Activated naive CD8-positive, alpha-beta T cell treated with anti-CD3 and anti-CD28 coated beads, Interleukin-2, amount 10 ng/mL, durations not matched to agents 7 days and 5 days (primary cell): ENCODE measurements at regions of chr13 and their contacts with region 1.

Region 1: DNA sequence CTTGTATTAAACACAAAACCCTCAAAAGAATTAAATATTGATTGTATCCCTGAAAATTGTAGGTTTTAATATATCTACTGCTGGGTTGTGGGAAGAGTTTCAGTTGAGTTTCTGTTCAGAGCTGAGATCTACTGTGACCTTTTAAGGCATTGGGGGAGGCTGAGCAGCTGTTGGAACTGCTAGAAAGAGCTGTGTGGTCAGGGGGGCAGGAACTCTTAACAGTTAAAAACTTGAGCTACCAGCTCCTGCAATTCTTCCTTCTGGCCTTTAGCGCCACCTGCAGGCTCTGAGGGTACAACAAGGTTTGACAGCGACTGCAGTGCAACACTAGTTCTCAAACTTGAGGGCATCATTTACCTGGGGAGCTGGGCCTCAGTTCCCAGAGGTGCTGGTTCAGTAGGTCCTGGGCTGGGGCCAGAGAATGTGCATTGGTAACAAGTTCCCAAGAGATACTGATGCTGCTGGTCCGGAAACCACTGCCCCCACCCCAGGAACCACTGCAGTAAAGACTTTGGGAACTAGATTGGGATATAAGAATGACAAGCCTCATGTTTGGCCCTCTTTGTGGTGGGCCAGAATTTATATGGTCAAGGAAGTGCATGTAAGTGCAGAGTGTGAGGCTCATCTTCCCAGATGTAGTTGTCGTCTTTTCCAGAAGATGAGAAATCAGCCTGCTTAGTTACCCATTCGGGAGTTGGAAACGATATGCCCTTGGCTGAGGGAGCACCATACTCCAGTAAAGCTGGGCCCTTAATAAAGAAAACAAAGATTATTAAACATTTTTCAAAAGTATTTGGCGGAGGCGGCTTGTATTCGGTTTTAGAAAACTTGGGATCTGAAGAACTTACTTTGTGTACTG is 2.6 kb downstream of the RNASEH2B start:
- DNase-seq: peak; percentile 92
- ATAC-seq: peak; percentile 73
- H3K4me3 Mint-ChIP-seq: peak overlapping the region; percentile 94
- H3K27ac Mint-ChIP-seq: peak overlapping the region; percentile 98
- H3K4me1 Mint-ChIP-seq: peaks cover 58% of the 10 kb centered on the region
- H3K27me3 Mint-ChIP-seq: no peaks in the 10 kb centered on the region

Region 2: DNA sequence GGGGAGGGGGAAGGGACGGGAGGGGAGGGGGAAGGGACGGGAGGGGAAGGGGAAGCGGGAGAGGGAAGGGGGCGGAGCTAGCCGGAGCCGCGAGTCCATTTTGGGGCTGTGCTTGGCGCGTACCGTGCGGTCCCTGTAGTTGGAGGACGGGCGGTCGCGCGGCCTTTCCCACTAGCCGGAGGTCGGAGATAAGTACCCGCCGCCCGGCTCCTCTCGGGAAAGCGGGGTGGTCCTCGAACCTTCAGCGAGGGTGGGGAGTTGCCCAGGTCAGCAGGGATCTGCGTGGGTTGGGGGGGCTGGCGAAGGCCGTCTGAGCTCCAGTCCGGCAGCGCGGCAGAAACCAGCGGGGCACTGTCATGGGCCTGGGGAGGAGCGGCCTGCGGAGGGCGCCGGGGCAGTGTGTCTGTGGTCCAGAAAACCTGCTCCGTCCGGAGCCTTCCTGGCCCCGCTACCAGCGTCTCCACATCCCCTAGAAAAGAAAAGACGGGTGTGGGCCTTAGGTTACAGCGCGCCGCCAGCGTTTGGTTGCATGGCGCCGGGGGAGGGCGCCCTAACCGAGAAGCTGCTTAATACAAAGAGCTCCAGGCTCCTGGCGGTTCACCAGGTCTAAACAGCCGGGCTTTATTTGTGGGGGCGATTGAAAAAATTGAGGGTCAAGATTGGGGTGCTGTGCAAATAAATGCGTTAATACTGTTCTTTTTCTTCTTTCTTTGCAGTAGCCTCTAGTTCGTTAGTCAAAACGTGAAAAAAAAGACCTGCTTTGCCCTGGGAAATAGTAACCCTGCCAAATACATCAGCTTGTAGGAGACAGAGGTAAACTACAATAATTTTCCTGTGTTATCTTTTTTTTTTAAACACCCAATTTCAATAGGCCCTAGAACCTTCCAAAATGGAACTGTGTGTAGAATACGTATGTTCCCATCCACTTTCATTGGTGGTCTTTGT is 914.9 kb before region 1 on chr13 and contains the start of gene TRIM13:
- POLR2A ChIA-PET with region 1: interaction called, 12 read pairs
- DNase-seq: peak; percentile 86
- ATAC-seq: peak; percentile 87
- H3K4me3 Mint-ChIP-seq: peak within 1 kb of the TSS; percentile 94
- H3K27ac Mint-ChIP-seq: peak within 1 kb of the TSS; percentile 89
- H3K4me1 Mint-ChIP-seq: peaks cover 22% of the 10 kb centered on the region
- H3K27me3 Mint-ChIP-seq: no peaks in the 10 kb centered on the region
- total RNA-seq, gene TRIM13: 19.7 to 19.9 TPM

Region 3: GRCh38 chr13:50081679-50082425 is 830.3 kb before region 1 on chr13:
- POLR2A ChIA-PET with region 1: interaction called, 32 read pairs
- DNase-seq: peak; percentile 95
- ATAC-seq: peak; percentile 80
- H3K4me3 Mint-ChIP-seq: peak overlapping the region; percentile 100
- H3K27ac Mint-ChIP-seq: peak overlapping the region; percentile 100
- H3K4me1 Mint-ChIP-seq: peaks cover 31% of the 10 kb centered on the region
- H3K27me3 Mint-ChIP-seq: no peaks in the 10 kb centered on the region

Region 4: DNA sequence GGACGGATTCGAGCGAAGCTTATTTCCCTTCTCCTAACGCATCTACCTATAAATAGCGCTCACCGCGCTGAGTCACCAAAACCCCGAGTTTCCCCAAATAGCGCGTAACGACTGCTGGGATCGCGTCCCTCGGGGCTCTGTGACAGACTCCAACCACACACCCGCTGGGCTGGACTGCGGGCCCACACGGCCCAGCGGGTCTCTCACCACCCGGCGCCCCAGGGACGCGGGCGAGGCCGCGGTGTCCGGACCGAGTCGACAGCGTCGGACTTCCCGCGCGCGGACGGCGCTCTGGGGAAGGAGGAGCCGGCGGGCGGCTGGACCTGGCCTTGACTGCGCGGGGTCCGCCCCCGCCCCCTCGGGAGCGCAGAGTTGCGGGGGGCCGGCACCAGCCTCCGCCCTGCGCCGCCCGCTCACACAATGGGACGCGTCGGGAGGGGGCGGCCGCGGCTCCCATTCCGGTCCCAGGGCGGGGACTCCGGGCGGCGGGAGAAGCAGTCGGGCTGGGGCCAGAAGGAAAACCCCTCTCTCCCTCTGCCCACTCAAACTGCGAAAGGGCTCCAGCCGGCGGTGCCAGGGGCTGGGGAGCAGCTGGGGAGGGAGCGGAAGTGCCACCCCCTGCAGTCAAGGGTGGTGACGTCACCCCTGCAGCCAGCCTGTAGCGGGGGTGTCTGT is 788.2 kb before region 1 on chr13:
- POLR2A ChIA-PET with region 1: interaction called, 46 read pairs
- DNase-seq: no peak
- ATAC-seq: peak; percentile 77
- H3K4me3 Mint-ChIP-seq: peak overlapping the region; percentile 91
- H3K27ac Mint-ChIP-seq: peak overlapping the region; percentile 83
- H3K4me1 Mint-ChIP-seq: peaks cover 32% of the 10 kb centered on the region
- H3K27me3 Mint-ChIP-seq: peaks cover 13% of the 10 kb centered on the region

Region 5: DNA sequence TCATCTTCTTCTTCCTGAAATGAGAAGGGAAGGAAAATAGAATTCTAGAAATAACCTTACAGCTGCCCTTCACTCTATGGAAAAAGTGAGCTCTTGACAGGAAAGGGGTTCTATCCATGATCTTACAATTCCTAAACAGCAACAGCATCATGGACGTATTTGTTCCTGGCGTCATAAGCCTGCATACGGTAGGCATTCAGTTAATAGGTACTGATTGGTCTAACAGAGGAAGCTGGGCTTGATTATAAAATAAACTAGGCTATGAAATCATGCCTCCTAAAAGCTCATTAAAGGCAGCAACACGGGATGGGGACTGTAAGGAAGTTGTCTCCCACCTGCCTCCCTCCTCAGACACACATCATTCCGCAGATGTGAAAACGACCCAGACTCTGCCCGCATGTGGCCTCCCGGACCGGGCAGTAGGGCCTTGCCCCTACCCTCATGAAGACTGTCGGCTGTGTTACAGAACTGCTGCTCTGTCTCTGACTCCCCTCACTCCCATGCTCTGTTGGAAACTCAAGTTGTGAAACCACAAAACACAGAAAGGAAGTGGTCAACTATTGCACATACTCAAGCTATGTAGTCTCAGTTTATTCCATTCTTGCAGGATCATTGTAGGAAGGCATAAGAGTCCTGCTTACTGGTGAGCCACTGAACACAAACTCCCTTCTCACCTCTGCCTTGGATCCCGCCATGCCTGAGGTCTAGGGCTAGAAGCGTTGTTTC is 198.5 kb before region 1 on chr13:
- POLR2A ChIA-PET with region 1: interaction called, 11 read pairs
- DNase-seq: peak; percentile 50
- ATAC-seq: peak; percentile 96
- H3K4me3 Mint-ChIP-seq: peak overlapping the region; percentile 67
- H3K27ac Mint-ChIP-seq: peak overlapping the region; percentile 78
- H3K4me1 Mint-ChIP-seq: peaks cover 25% of the 10 kb centered on the region
- H3K27me3 Mint-ChIP-seq: peaks cover 14% of the 10 kb centered on the region

Region 6: GRCh38 chr13:50805805-50806204 is 106.4 kb before region 1 on chr13:
- POLR2A ChIA-PET with region 1: interaction called, 13 read pairs
- DNase-seq: no peak
- ATAC-seq: no peak
- H3K4me3 Mint-ChIP-seq: no peak overlapping the region
- H3K27ac Mint-ChIP-seq: no peak overlapping the region
- H3K4me1 Mint-ChIP-seq: peaks cover 14% of the 10 kb centered on the region
- H3K27me3 Mint-ChIP-seq: peaks cover 2% of the 10 kb centered on the region

Region 7: GRCh38 chr13:50893211-50893852 is 18.8 kb before region 1 on chr13:
- POLR2A ChIA-PET with region 1: interaction called, 131 read pairs
- DNase-seq: no peak
- ATAC-seq: peak; percentile 95
- H3K4me3 Mint-ChIP-seq: peak overlapping the region; percentile 75
- H3K27ac Mint-ChIP-seq: peak overlapping the region; percentile 93
- H3K4me1 Mint-ChIP-seq: peaks cover 37% of the 10 kb centered on the region
- H3K27me3 Mint-ChIP-seq: no peaks in the 10 kb centered on the region

Region 8: DNA sequence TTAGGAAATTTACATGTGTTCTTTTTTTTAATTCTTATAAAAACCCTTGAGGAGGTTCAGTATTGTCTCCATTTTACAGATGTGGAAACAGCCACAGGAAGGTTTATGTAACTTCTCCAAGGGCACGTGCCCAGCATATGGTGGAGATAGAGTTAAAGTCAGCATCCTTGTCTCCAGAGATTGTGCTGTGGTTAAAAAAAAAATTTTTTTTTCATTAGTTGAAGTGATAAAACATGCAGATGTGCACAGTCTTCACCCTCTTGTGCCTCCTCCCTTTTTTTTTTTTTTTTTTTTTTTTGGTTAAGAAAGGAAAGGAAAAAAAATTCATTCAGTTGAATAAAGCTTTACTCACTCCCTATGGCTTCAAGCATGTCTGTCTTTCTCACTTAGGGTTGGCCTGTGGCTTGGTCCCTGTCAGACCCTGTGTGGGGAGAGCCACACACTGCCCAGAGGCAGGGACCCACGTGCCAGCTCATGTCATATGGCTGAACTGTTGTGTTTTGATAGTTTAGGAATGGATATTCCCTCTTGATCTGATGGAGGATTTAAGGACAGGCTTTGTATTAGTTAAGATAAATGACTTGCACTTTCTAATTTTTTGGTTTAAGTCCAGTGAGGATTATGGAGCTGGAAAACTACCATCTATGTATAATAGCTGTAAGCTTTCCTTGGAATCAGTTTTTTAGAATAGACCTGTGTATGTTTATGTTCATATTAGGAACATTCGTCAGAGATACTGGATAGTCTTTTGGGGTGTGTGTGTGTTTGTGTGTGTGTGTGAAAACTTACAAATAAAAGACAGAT is 16.7 kb after region 1 on chr13:
- POLR2A ChIA-PET with region 1: no interaction called
- DNase-seq: no peak
- ATAC-seq: no peak
- H3K4me3 Mint-ChIP-seq: no peak overlapping the region
- H3K27ac Mint-ChIP-seq: no peak overlapping the region
- H3K4me1 Mint-ChIP-seq: peaks cover 12% of the 10 kb centered on the region
- H3K27me3 Mint-ChIP-seq: no peaks in the 10 kb centered on the region